CD8-positive, alpha-beta T cell (primary cell): ENCODE measurements at regions of chr11 and their contacts with region 1.

Region 1: DNA sequence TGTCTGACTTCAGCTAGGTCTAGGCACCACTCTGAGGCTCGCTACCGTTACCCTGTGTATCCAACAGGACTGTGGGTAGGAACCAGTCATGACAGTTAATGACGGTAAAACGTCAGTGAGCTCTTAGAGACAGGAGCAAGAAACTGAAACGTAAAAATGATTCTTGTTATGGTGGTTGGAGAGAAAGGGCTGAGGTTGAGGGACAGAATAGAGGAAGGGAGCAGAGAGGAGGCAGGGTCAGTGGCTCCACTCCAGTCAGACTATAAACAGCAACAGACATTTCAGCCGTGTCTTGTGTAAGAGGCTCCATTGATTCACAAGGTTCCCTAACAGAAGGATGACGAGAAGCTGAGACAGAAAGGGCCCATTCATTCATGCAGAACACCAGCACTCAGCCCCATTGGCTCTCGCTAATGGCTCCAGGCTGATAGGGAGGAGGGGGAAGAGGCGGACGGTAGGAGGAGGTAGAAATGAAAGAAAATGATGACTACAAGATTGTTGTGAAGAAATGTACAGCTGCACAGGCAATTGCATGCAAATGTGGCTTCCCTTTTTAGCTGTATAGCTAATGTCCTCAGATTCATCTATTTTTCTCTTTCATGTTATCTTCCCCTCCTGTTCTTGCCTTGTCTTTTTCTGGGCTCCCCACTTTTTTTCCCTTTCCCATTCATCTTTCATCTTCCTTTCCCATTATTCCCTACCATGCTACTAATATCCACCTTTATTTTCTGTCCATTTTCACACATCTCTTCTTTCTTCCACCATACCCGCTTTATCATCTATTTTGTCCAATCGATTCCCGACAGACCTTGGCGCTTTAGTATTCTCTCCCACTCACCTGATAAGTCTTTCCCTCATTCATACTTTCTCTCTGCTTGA is 34.3 kb downstream of the ETS1 start:
- DNase-seq: peak in 2 of 9 experiments; percentile 25 to 54
- ATAC-seq: no peak
- H3K4me3 ChIP-seq: no peak overlapping the region
- H3K4me3 Mint-ChIP-seq: peak overlapping the region; percentile 38
- H3K27ac ChIP-seq: peak overlapping the region; percentile 2 to 86
- H3K27ac Mint-ChIP-seq: peak overlapping the region; percentile 91
- H3K4me1 ChIP-seq: peaks cover 59% of the 10 kb centered on the region
- H3K4me1 Mint-ChIP-seq: peaks cover 60% of the 10 kb centered on the region
- H3K27me3 ChIP-seq: no peaks in the 10 kb centered on the region
- H3K27me3 Mint-ChIP-seq: no peaks in the 10 kb centered on the region
- CTCF ChIP-seq: no peak

Region 2: GRCh38 chr11:128610721-128611617 is 57.9 kb after region 1 on chr11:
- CTCF ChIA-PET with region 1: interaction called, 3 read pairs
- POLR2A ChIA-PET with region 1: interaction called, 8 read pairs
- intact Hi-C with region 1: loop called in 1 of 2 experiments (anchors 5 kb)
- DNase-seq: peak; percentile 50 to 87 (median 74)
- ATAC-seq: peak; percentile 88
- H3K4me3 ChIP-seq: peak overlapping the region in 1 of 2 experiments; percentile 9
- H3K4me3 Mint-ChIP-seq: peak overlapping the region; percentile 57
- H3K27ac ChIP-seq: peak overlapping the region; percentile 50 to 70
- H3K27ac Mint-ChIP-seq: peak overlapping the region; percentile 92
- H3K4me1 ChIP-seq: peaks cover 63% of the 10 kb centered on the region
- H3K4me1 Mint-ChIP-seq: peaks cover 87% of the 10 kb centered on the region
- H3K27me3 ChIP-seq: no peaks in the 10 kb centered on the region
- H3K27me3 Mint-ChIP-seq: no peaks in the 10 kb centered on the region
- CTCF ChIP-seq: no peak